ENCODE measurements at regions of chr4 and their contacts with region 1.

Region 1: DNA sequence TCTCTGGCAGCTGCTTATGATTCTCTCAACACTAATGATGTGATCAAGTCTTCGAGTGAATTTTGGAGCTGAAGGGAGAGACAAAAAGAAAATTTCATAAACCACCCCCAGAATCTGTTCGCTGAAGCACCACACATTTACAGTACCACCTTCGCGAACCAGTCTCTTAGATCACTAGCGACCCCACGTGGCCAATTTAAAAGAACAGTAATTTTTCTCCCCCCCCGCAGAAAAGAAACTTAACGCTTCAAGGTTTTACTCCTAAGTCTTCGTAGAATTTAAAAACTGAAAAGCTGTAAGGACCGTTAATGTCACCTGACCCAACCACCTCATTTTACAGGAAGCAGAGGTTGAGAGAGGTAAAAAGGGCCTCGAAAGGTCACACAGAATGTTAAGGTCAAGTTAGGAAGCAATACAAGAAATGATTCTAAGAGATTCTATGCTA is 187.5 kb downstream of the QDPR start:
- DNase-seq: no peak
- ATAC-seq: peak; percentile 50

Region 2: DNA sequence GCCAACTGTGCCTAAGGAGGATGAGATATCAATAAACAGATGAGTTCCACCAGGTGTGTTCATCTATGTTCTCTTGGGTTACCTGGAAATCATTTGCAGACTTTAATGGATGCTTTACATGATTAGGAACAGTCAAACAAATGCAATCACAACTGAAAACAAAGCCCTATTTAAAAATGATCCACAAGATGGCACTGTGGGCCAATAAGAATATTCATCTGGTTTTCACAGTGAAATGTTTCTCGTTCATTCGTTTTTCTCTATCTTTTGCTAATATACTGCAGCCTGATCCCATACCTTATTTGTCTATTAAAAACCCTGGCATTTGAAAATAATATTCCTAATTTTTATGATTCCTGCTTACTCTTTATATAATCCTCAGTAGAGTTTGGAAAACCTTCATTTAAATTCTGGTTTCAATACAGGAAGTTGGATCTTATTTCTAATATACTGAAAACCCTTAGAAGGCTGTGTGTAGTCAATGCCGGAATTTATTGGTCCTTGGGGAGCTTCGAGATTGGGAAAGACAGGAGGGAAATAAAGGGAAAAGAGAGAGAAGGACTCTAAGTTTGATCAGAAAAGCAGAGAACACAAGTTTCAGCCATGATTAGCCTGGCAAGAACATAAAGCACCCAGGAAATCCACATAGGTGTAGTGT is 1034.4 kb before region 1 on chr4:
- intact Hi-C with region 1: loop called (anchors 2 kb)
- DNase-seq: no peak
- ATAC-seq: no peak

Region 3: DNA sequence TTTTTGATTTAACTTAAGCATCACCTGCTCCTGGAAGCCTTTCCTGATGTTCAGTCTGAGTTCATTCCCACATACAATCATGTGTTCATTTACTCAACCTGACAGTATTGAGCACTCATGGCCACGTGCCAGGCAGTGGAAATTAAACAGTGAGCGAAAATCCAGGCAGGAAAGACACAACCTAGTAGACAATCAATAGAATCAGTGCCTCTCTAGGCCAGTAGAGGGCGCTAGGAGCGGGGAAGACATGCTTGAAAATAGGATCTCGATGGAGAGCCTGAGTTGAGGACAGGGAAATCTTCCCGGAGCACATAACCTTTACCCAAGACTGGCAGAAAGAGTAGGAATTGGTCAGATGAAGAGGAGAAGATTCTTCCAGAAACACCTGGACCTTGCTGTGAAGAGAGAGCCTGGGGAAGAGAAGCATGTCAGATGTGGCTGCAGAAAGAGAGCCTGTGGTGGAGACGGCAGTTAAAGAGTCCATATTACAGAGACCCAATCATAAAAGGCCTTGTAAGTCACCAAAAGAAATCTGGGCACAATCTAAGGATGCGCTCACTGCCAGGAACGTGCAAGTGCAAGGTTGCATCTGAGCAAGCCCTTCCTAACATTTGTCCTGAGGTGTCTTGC is 529.5 kb before region 1 on chr4:
- intact Hi-C with region 1: loop called (anchors 5 kb)
- DNase-seq: no peak
- ATAC-seq: peak; percentile 52

Region 4: GRCh38 chr4:16914208-16914607 is 410.2 kb before region 1 on chr4:
- intact Hi-C with region 1: loop called (anchors 2 kb)
- DNase-seq: no peak
- ATAC-seq: no peak

Region 5: GRCh38 chr4:17173300-17173699 is 151.1 kb before region 1 on chr4:
- intact Hi-C with region 1: loop called (anchors 5 kb)
- DNase-seq: no peak
- ATAC-seq: peak; percentile 54

Region 6: GRCh38 chr4:17511950-17512795 is 187.8 kb after region 1 on chr4 and contains the start of gene QDPR:
- intact Hi-C with region 1: no loop called
- DNase-seq: peak; percentile 91
- ATAC-seq: peak; percentile 95
- total RNA-seq, gene QDPR: 53.7 TPM

Measured in Right ventricle myocardium inferior (tissue), 1 donor.